Mammary epithelial cell (primary cell): ENCODE measurements at regions of chr17 and their contacts with region 1.

Region 1: DNA sequence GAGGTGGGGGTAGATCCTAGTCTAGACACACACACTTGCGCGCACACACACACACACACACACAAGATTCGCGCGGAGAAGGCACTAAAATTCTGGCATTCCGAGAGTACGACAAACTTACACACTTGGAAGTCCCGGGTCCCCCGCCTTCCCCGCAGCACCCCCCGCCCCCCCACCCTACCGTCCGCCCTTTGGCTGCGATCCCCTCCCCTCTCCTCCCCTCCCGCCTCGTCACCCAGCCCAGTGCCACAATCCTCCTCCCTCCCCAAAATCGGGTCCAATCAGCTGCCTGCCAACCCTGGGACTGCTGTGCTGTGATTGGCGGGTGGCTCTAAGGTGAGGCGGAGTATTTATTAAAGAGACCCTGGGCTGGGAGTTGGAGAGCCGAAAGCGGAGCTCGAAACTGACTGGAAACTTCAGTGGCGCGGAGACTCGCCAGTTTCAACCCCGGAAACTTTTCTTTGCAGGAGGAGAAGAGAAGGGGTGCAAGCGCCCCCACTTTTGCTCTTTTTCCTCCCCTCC is at the start of gene SOX9:
- DNase-seq: peak; percentile 98
- H3K4me3 ChIP-seq: peak within 1 kb of the TSS; percentile 67 to 98 (median 96)
- H3K27ac ChIP-seq: peak within 1 kb of the TSS; percentile 88
- H3K4me1 ChIP-seq: peaks cover 55% of the 10 kb centered on the region
- H3K27me3 ChIP-seq: no peaks in the 10 kb centered on the region
- CTCF ChIP-seq: no peak
- total RNA-seq, gene SOX9: 77.4 to 81.9 TPM

Region 2: GRCh38 chr17:71237903-71238538 is 882.7 kb before region 1 on chr17:
- CTCF ChIA-PET with region 1: no interaction called
- dilution Hi-C with region 1: no loop called
- in situ Hi-C with region 1: loop called (anchors 5 to 10 kb)
- intact Hi-C with region 1: loop called (anchors 1 kb)
- DNase-seq: peak; percentile 83
- H3K4me3 ChIP-seq: no peak overlapping the region
- H3K27ac ChIP-seq: no peak overlapping the region
- H3K4me1 ChIP-seq: peaks cover 9% of the 10 kb centered on the region
- H3K27me3 ChIP-seq: no peaks in the 10 kb centered on the region
- CTCF ChIP-seq: peak; percentile 49 to 57

Region 3: GRCh38 chr17:71741836-71742235 is 378.9 kb before region 1 on chr17:
- CTCF ChIA-PET with region 1: no interaction called
- dilution Hi-C with region 1: no loop called
- in situ Hi-C with region 1: no loop called
- intact Hi-C with region 1: loop called (anchors 5 kb)
- DNase-seq: peak; percentile 38
- H3K4me3 ChIP-seq: no peak overlapping the region
- H3K27ac ChIP-seq: no peak overlapping the region
- H3K4me1 ChIP-seq: no peaks in the 10 kb centered on the region
- H3K27me3 ChIP-seq: no peaks in the 10 kb centered on the region
- CTCF ChIP-seq: no peak

Region 4: GRCh38 chr17:71900621-71901229 is 220.0 kb before region 1 on chr17:
- CTCF ChIA-PET with region 1: no interaction called
- dilution Hi-C with region 1: no loop called
- in situ Hi-C with region 1: no loop called
- intact Hi-C with region 1: loop called (anchors 2 kb)
- DNase-seq: peak; percentile 94
- H3K4me3 ChIP-seq: no peak overlapping the region
- H3K27ac ChIP-seq: peak overlapping the region; percentile 65
- H3K4me1 ChIP-seq: peaks cover 38% of the 10 kb centered on the region
- H3K27me3 ChIP-seq: no peaks in the 10 kb centered on the region
- CTCF ChIP-seq: no peak

Region 5: DNA sequence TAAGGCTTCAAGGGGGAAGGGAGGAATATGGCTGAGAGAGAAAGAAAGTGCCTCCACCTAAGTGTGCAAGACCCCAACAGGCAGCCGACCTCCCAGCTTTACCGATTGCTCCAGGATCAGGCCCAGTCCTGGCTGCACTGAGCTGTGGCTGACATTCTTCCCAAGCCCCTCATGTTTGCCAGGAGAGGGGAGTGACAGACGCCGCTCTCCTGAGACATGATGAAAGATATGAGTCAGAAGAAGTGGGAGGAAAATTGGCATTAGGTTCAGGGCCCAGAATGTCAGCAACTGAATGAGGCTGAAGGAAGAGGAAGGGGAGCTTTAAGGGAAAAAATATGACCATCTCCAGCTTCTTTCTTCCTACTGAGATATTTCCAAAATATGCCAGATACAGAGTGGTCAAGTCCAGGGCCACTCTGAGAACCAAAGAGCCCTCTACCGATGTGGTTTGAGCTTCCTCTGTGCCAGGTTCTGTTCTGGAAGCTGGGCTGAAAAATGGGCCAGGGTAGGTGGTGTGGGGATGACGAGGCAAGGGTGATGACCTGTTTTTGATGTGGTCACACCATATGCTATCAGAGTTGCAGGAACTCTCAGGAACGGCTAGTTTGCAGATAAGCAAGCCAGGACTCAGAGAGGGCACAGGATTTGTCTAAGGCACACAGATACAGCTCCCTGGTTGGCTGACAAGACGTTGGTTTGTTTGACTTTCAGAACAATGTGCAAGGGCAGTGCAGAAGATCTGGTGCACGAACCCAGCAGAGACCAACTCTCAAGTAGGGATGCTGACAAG is 176.8 kb after region 1 on chr17:
- CTCF ChIA-PET with region 1: no interaction called
- dilution Hi-C with region 1: no loop called
- in situ Hi-C with region 1: no loop called
- intact Hi-C with region 1: loop called (anchors 2 kb)
- DNase-seq: peak; percentile 68
- H3K4me3 ChIP-seq: no peak overlapping the region
- H3K27ac ChIP-seq: no peak overlapping the region
- H3K4me1 ChIP-seq: peaks cover 24% of the 10 kb centered on the region
- H3K27me3 ChIP-seq: no peaks in the 10 kb centered on the region
- CTCF ChIP-seq: no peak

Region 6: GRCh38 chr17:72376526-72377345 is 256.0 kb after region 1 on chr17:
- CTCF ChIA-PET with region 1: no interaction called
- dilution Hi-C with region 1: no loop called
- in situ Hi-C with region 1: no loop called
- intact Hi-C with region 1: no loop called
- DNase-seq: no peak
- H3K4me3 ChIP-seq: no peak overlapping the region
- H3K27ac ChIP-seq: no peak overlapping the region
- H3K4me1 ChIP-seq: no peaks in the 10 kb centered on the region
- H3K27me3 ChIP-seq: no peaks in the 10 kb centered on the region
- CTCF ChIP-seq: no peak

Region 7: DNA sequence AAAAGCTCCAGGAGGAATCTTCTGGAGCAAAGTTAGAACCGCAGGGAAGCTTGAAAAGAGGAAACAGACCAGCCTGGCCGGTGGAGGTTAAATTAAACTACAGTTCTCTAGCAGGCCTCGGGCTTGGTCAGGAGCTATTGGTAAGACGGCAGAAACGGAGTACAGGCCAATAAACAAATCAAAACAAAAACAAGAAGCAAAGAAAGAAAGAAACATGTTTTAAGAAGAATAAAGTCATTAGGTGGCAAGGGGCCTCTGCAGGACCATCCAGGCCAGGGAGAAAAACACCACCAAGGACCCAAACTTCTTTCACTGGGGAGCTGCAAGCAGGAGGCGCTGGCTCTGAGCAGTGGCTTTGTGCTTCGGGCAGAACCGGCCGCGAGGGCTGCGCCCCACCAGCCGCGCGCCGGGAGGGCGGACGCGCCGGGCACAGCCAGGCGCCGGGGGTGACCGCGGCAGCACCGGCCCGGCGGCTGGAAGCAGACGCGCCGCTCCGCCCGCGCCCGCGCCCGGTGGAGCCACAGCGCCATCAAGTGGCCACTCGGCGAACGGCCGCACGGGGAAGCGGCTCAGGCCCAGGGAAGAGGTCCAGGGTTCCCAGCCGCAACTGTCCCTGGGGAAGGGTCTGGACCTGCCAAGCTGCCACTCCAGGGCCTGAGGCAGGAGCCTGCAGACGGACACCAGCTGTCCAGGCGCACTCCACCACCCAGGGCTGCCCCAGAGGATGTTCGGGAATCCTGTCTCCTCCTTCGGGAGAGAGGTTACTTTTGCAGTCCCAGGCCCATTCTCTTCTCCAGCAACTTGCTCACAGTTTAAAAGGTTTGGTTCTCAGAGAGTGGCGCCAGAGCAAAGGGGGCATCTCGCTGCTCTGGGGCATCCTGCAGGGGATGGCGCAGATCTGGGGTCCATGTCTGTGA is 419.5 kb after region 1 on chr17:
- CTCF ChIA-PET with region 1: no interaction called
- dilution Hi-C with region 1: loop called (anchors 25 kb)
- in situ Hi-C with region 1: loop called (anchors 10 kb)
- intact Hi-C with region 1: loop called (anchors 1 kb)
- DNase-seq: peak; percentile 67
- H3K4me3 ChIP-seq: peak overlapping the region in 2 of 3 experiments; percentile 10 to 20
- H3K27ac ChIP-seq: peak overlapping the region; percentile 43
- H3K4me1 ChIP-seq: peaks cover 16% of the 10 kb centered on the region
- H3K27me3 ChIP-seq: no peaks in the 10 kb centered on the region
- CTCF ChIP-seq: peak; percentile 60 to 83